ENCODE measurements at regions of chr16 and their contacts with region 1.

Region 1: GRCh38 chr16:30032083-30032819 is 1.2 kb upstream of the TLCD3B start:
- DNase-seq: peak; percentile 68 to 72
- H3K4me3 ChIP-seq: no peak overlapping the region
- H3K4me3 Mint-ChIP-seq: no peak overlapping the region
- H3K27ac Mint-ChIP-seq: no peak overlapping the region
- H3K4me1 ChIP-seq: no peaks in the 10 kb centered on the region
- H3K4me1 Mint-ChIP-seq: peaks cover 7% of the 10 kb centered on the region
- H3K27me3 ChIP-seq: no peaks in the 10 kb centered on the region; the same call in 1 of the 2 replicates
- H3K27me3 Mint-ChIP-seq: peaks cover 12% of the 10 kb centered on the region
- CTCF ChIP-seq: peak; percentile 70 to 85

Region 2: DNA sequence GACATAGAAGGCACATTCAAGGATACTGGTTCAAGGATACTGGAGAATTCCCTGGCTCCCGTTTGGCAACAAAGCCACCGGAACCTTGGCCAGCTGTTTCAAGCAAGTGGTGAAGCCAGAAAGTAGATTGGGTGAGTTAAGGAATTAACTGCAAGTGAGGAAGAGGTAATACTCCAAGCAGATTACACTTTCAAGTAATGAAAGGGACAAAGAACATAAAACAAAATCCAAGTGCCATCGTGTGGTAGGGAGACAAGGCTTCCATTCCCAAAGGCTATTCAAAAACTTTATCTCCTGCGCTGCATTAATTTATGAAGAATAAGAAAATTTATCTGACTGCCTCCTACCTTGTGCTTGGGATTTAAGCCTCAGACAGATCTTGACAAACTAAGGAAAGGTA is 1848.3 kb before region 1 on chr16:
- CTCF ChIA-PET with region 1: interaction called, 11 read pairs
- POLR2A ChIA-PET with region 1: no interaction called
- intact Hi-C with region 1: no loop called
- DNase-seq: no peak
- H3K4me3 ChIP-seq: no peak overlapping the region
- H3K4me3 Mint-ChIP-seq: no peak overlapping the region
- H3K27ac Mint-ChIP-seq: peak overlapping the region; percentile 10
- H3K4me1 ChIP-seq: peaks cover 35% of the 10 kb centered on the region
- H3K4me1 Mint-ChIP-seq: peaks cover 20% of the 10 kb centered on the region
- H3K27me3 ChIP-seq: no peaks in the 10 kb centered on the region
- H3K27me3 Mint-ChIP-seq: no peaks in the 10 kb centered on the region
- CTCF ChIP-seq: no peak

Region 3: GRCh38 chr16:28981517-28981916 is 1050.7 kb before region 1 on chr16:
- CTCF ChIA-PET with region 1: no interaction called
- POLR2A ChIA-PET with region 1: no interaction called
- intact Hi-C with region 1: no loop called
- DNase-seq: peak in 1 of 2 experiments; percentile 31
- H3K4me3 ChIP-seq: no peak overlapping the region
- H3K4me3 Mint-ChIP-seq: no peak overlapping the region
- H3K27ac Mint-ChIP-seq: no peak overlapping the region
- H3K4me1 ChIP-seq: no peaks in the 10 kb centered on the region
- H3K4me1 Mint-ChIP-seq: peaks cover 7% of the 10 kb centered on the region
- H3K27me3 ChIP-seq: no peaks in the 10 kb centered on the region
- H3K27me3 Mint-ChIP-seq: no peaks in the 10 kb centered on the region
- CTCF ChIP-seq: peak; percentile 35 to 66

Region 4: GRCh38 chr16:29900102-29900887 is 132.0 kb before region 1 on chr16 and contains the start of gene ASPHD1:
- CTCF ChIA-PET with region 1: no interaction called
- POLR2A ChIA-PET with region 1: no interaction called
- intact Hi-C with region 1: loop called (anchors 10 kb)
- DNase-seq: peak; percentile 73 to 83
- H3K4me3 ChIP-seq: peak within 1 kb of the TSS; percentile 66
- H3K4me3 Mint-ChIP-seq: peak within 1 kb of the TSS; percentile 93
- H3K27ac Mint-ChIP-seq: peak within 1 kb of the TSS; percentile 88
- H3K4me1 ChIP-seq: peaks cover 22% of the 10 kb centered on the region; the same call in 1 of the 2 replicates
- H3K4me1 Mint-ChIP-seq: peaks cover 22% of the 10 kb centered on the region
- H3K27me3 ChIP-seq: no peaks in the 10 kb centered on the region
- H3K27me3 Mint-ChIP-seq: no peaks in the 10 kb centered on the region
- CTCF ChIP-seq: no peak
- total RNA-seq, gene ASPHD1: 13.2 and 14.7 TPM in 2 replicates

Region 5: GRCh38 chr16:29943846-29944669 is 88.2 kb before region 1 on chr16:
- CTCF ChIA-PET with region 1: no interaction called
- POLR2A ChIA-PET with region 1: interaction called, 16 read pairs
- intact Hi-C with region 1: no loop called
- DNase-seq: peak; percentile 86 to 94
- H3K4me3 ChIP-seq: no peak overlapping the region
- H3K4me3 Mint-ChIP-seq: peak overlapping the region; percentile 45
- H3K27ac Mint-ChIP-seq: peak overlapping the region; percentile 74
- H3K4me1 ChIP-seq: peaks cover 31% of the 10 kb centered on the region
- H3K4me1 Mint-ChIP-seq: peaks cover 18% of the 10 kb centered on the region
- H3K27me3 ChIP-seq: no peaks in the 10 kb centered on the region
- H3K27me3 Mint-ChIP-seq: no peaks in the 10 kb centered on the region
- CTCF ChIP-seq: peak in 1 of 2 experiments; percentile 38

Region 6: GRCh38 chr16:30104494-30104968 is 72.3 kb after region 1 on chr16:
- CTCF ChIA-PET with region 1: no interaction called
- POLR2A ChIA-PET with region 1: interaction called, 14 read pairs
- intact Hi-C with region 1: no loop called
- DNase-seq: peak; percentile 88 to 89
- H3K4me3 ChIP-seq: no peak overlapping the region
- H3K4me3 Mint-ChIP-seq: peak overlapping the region; percentile 66
- H3K27ac Mint-ChIP-seq: peak overlapping the region; percentile 97
- H3K4me1 ChIP-seq: peaks cover 22% of the 10 kb centered on the region
- H3K4me1 Mint-ChIP-seq: peaks cover 13% of the 10 kb centered on the region
- H3K27me3 ChIP-seq: no peaks in the 10 kb centered on the region
- H3K27me3 Mint-ChIP-seq: no peaks in the 10 kb centered on the region
- CTCF ChIP-seq: no peak